BJ (cell line): ENCODE measurements at regions of chr17 and their contacts with region 1.

Region 1: GRCh38 chr17:40098846-40099618 is 1.4 kb downstream of the NR1D1 start:
- DNase-seq: peak; percentile 98
- H3K4me3 ChIP-seq: peak overlapping the region; percentile 89
- H3K27me3 ChIP-seq: no peaks in the 10 kb centered on the region
- CTCF ChIP-seq: no peak

Region 2: GRCh38 chr17:40026816-40027613 is 72.0 kb before region 1 on chr17:
- CTCF ChIA-PET with region 1: interaction called, 10 read pairs
- POLR2A ChIA-PET with region 1: interaction called, 9 read pairs
- DNase-seq: no peak
- H3K4me3 ChIP-seq: no peak overlapping the region
- H3K27me3 ChIP-seq: no peaks in the 10 kb centered on the region
- CTCF ChIP-seq: peak; percentile 89

Region 3: GRCh38 chr17:40086150-40087044 is 12.6 kb before region 1 on chr17:
- CTCF ChIA-PET with region 1: interaction called, 10 read pairs
- POLR2A ChIA-PET with region 1: interaction called, 3 read pairs
- DNase-seq: no peak
- H3K4me3 ChIP-seq: no peak overlapping the region
- H3K27me3 ChIP-seq: no peaks in the 10 kb centered on the region
- CTCF ChIP-seq: peak; percentile 82

Region 4: GRCh38 chr17:40139566-40140058 is 40.6 kb after region 1 on chr17:
- CTCF ChIA-PET with region 1: no interaction called
- POLR2A ChIA-PET with region 1: no interaction called
- DNase-seq: no peak
- H3K4me3 ChIP-seq: peak overlapping the region; percentile 50
- H3K27me3 ChIP-seq: no peaks in the 10 kb centered on the region
- CTCF ChIP-seq: no peak

Region 5: DNA sequence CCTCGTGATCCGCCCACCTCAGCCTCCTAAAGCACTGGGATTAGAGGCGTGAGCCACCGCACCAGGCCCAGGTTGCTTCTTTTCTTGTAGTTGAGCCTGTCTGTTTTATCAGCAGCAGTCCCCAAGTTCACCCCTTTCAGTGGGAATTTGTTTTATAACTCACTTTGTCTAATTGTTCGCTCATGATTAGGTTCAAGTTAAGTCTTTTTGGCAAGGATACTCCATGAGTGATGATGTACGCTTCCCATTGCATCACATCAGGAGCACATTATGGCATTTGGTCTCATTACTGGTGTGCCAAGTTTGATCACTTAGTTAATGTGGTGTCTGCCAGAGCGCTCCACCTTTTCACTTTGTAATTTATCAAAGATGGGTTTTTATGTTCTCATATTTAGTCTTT is 279.9 kb after region 1 on chr17:
- CTCF ChIA-PET with region 1: no interaction called
- POLR2A ChIA-PET with region 1: no interaction called
- DNase-seq: no peak
- H3K4me3 ChIP-seq: no peak overlapping the region
- H3K27me3 ChIP-seq: no peaks in the 10 kb centered on the region
- CTCF ChIP-seq: no peak

Region 6: GRCh38 chr17:41037853-41038350 is 938.9 kb after region 1 on chr17:
- CTCF ChIA-PET with region 1: no interaction called
- POLR2A ChIA-PET with region 1: interaction called, 12 read pairs
- DNase-seq: no peak
- H3K4me3 ChIP-seq: no peak overlapping the region
- H3K27me3 ChIP-seq: no peaks in the 10 kb centered on the region
- CTCF ChIP-seq: no peak